ENCODE measurements at regions of chr17 and their contacts with region 1.

Region 1: GRCh38 chr17:42438600-42439567 is 15.8 kb upstream of the CAVIN1 start:
- DNase-seq: peak; percentile 81
- H3K4me3 ChIP-seq: no peak overlapping the region
- H3K27ac ChIP-seq: peak overlapping the region; percentile 2 to 77 (median 62)
- H3K4me1 ChIP-seq: peaks cover 0 to 55% (median 24%) of the 10 kb centered on the region in 6 donors
- H3K27me3 ChIP-seq: no peaks in the 10 kb centered on the region
- CTCF ChIP-seq: peak in 7 of 11 experiments; percentile 9 to 63 (median 47)
- POLR2A ChIP-seq: no peak

Region 2: GRCh38 chr17:42484304-42484703 is 45.4 kb after region 1 on chr17:
- intact Hi-C with region 1: loop called (anchors 10 kb)
- DNase-seq: no peak
- H3K4me3 ChIP-seq: peak overlapping the region in 1 of 8 donors; percentile 24
- H3K27ac ChIP-seq: peak overlapping the region in 1 of 8 donors; percentile 11
- H3K4me1 ChIP-seq: peaks cover 0 to 36% (median 2%) of the 10 kb centered on the region in 6 donors
- H3K27me3 ChIP-seq: no peaks in the 10 kb centered on the region
- CTCF ChIP-seq: no peak
- POLR2A ChIP-seq: no peak